Activated CD4-positive, alpha-beta T cell treated with anti-CD3 and anti-CD28 coated beads, Interleukin-2, amount 10 ng/mL, durations not matched to agents 24 days and 14 days (primary cell): ENCODE measurements at regions of chr15 and their contacts with region 1.

Region 1: DNA sequence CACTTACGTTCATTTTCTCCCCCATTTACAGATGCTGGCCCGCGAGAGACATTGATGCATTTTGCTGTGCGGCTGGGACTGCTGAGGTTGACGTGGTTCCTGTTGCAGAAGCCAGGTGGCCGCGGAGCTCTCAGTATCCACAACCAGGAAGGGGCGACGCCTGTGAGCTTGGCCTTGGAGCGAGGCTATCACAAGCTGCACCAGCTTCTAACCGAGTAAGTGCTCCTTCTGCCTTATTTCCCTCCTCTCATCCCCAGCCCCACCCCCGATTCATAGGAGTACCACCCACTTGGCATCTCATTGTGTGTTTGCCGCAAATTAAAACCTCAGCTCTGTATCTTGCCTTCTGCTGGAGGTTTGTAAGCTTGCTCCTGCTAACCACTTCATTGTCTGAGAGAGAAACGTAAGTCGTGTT is 163.3 kb downstream of the AKAP13 start:
- DNase-seq: peak; percentile 82
- H3K4me3 Mint-ChIP-seq: peak overlapping the region; percentile 74
- H3K27ac Mint-ChIP-seq: peak overlapping the region; percentile 64
- H3K4me1 Mint-ChIP-seq: peaks cover 75% of the 10 kb centered on the region
- H3K27me3 Mint-ChIP-seq: no peaks in the 10 kb centered on the region

Region 2: GRCh38 chr15:85555875-85556617 is 12.3 kb after region 1 on chr15:
- intact Hi-C with region 1: loop called (anchors 1 kb)
- DNase-seq: no peak
- H3K4me3 Mint-ChIP-seq: no peak overlapping the region
- H3K27ac Mint-ChIP-seq: peak overlapping the region; percentile 2
- H3K4me1 Mint-ChIP-seq: peaks cover 41% of the 10 kb centered on the region
- H3K27me3 Mint-ChIP-seq: no peaks in the 10 kb centered on the region

Region 3: DNA sequence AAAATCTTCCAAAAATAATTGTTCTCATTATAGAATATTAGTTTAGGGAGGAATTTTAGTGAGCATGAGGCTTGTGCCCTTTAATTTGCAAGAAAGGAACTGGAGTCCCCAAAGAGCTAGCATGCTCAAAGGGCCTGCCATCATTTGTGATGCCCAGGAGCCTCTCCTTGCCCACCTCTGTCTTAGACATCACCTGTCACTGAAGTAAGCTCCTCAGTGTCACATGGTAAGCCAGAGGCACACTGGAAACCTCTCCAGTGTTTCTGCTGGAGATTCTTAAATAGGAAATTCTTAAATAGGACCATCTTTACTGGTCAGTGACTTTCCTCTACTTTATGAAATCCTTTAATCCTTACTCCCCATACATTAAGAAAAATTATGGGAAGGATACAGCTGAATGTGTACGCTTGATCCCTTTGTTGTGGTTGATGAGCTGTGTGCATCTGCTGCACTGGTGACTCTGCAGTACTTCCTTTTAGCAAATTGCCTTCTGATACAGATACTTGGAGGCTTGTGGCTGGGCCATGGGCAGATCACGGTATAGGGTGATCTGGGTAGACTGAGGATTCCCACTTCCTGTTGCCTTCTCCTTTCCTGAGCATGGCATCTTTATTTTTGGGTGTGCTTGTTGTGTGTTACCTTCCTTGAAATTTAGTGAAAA is 53.5 kb after region 1 on chr15:
- intact Hi-C with region 1: loop called (anchors 2 kb)
- DNase-seq: peak; percentile 76
- H3K4me3 Mint-ChIP-seq: peak overlapping the region; percentile 56
- H3K27ac Mint-ChIP-seq: peak overlapping the region; percentile 14
- H3K4me1 Mint-ChIP-seq: peaks cover 33% of the 10 kb centered on the region
- H3K27me3 Mint-ChIP-seq: no peaks in the 10 kb centered on the region